ENCODE measurements at regions of chr9 and their contacts with region 1.

Region 1: DNA sequence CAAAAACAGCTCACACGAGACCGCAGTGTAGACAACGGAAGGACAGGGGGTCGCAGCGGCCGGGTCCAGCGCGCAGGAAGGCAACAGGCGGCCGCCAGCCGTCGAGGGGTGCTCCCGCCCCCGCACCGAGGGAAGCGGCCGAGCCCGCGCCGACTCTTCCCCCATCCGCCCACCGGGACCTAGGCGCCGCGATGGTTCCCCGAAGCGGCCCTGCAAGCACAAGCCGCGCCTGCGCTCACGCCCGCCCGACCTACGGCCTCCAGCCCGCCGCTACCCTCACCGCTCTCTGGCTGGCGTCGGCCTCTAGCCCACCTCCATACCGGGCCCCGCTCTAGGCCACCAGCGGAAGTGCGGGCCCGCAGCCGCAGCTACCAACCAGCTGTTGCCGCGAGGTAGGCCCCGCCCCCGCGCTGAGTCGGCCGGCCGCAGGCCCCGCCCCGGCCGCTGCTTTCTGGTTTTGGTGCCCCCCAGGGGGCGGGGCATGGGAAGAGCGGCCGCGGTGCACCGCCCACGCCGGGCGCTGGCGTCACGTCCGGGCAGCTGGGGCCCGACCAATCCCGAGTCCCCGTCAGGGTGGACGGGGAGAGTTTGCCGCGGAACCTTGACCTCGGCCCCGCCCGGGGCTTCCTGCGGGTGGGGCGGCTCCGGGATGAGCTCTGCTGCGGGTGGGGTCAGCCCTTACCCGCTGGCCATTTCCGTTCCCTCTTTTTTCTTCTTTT is at the start of gene SETX:
- DNase-seq: peak; percentile 98
- H3K4me3 ChIP-seq: peak within 1 kb of the TSS; percentile 97
- H3K27ac ChIP-seq: peak within 1 kb of the TSS; percentile 77
- H3K4me1 ChIP-seq: peaks cover 53% of the 10 kb centered on the region
- CTCF ChIP-seq: no peak
- total RNA-seq, gene SETX: 79.2 and 85.8 TPM in 2 replicates

Region 2: GRCh38 chr9:131755541-131756198 is 599.1 kb before region 1 on chr9:
- CTCF ChIA-PET with region 1: interaction called, 12 read pairs
- POLR2A ChIA-PET with region 1: no interaction called
- intact Hi-C with region 1: no loop called
- DNase-seq: peak; percentile 94
- H3K4me3 ChIP-seq: no peak overlapping the region
- H3K27ac ChIP-seq: peak overlapping the region; percentile 18
- H3K4me1 ChIP-seq: peaks cover 80% of the 10 kb centered on the region
- CTCF ChIP-seq: peak; percentile 93

Region 3: DNA sequence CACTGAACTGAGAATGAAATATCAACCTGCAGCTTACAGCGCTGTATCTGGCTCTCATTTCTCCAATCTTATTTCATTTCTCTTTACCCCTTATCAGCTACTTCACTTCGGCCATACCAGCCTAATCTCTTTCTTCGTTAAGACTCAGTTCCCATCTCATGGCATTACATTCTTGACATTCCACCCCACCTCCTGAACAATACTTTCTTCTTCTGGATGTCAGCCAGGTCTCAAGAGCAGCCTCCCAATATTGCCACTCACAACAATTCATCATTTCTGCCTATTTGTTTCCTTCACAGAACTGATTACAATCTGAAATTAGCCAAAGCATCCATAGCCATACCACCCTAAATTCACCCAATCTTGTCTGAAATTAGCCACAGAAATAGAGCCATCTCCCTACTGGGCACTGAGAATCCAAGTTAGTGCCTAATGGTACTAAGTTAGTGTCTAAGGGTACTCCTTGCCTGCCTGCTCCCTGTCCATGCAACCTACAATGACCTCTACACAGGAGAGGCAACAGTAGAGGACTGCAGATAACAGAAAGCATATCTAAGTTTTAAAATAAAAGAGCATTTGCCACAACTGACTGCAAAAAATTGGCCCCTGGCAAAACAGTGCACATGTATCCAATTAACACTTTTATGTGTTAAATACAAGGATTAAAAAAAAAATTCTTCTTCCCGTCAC is 35.2 kb before region 1 on chr9:
- CTCF ChIA-PET with region 1: no interaction called
- POLR2A ChIA-PET with region 1: no interaction called
- intact Hi-C with region 1: no loop called
- DNase-seq: no peak
- H3K4me3 ChIP-seq: no peak overlapping the region
- H3K27ac ChIP-seq: no peak overlapping the region
- H3K4me1 ChIP-seq: peaks cover 4% of the 10 kb centered on the region
- CTCF ChIP-seq: no peak

Region 4: DNA sequence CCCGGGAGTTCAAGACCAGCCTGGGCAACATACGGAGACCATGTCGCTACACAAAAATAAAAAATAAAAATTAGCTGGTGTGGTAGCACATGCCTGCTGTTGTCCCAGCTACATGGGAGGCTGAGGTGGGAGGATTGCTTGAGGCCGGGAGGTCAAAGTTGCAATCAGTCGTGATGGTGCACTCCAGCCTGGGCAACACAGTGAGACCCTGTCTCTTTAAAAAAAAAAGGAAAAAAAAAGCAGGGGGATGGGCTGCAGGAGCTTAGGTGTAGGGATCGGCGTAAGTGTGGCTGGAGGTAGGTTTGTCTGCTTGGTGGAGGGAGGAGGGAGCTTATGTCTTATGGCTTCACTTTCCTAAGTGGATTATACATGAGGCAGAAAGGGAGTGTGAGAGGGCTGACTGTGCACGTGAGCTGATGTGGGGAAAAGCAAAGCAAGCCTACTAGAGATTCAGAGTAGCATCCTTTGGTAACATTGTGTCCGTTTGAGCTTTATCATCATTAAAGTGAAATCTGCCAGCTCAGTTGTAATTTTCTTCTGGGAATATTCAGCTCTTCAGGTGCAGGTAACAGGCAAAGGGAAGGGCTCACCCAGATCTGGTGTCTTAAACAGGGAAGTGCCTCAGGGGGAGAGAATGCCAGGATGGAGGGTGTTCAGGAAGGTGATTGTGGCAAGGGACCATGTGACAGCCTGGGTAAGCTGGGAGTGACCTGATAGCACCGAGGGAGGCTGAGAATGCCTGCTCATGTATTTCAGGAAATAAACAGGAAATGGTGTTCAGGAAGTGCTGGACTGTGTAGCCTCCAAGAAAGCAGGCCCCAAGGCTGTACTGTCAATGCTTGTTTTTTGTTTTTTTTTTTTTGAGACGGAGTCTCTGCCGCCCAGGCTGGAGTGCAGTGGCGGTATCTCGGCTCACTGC is 17.6 kb after region 1 on chr9:
- CTCF ChIA-PET with region 1: interaction called, 5 read pairs
- POLR2A ChIA-PET with region 1: interaction called, 19 read pairs
- intact Hi-C with region 1: no loop called
- DNase-seq: peak; percentile 52
- H3K4me3 ChIP-seq: peak overlapping the region; percentile 29
- H3K27ac ChIP-seq: peak overlapping the region; percentile 51
- H3K4me1 ChIP-seq: peaks cover 38% of the 10 kb centered on the region
- CTCF ChIP-seq: no peak

Region 5: GRCh38 chr9:132381966-132382541 is 27.3 kb after region 1 on chr9:
- CTCF ChIA-PET with region 1: interaction called, 10 read pairs
- POLR2A ChIA-PET with region 1: interaction called, 119 read pairs
- intact Hi-C with region 1: loop called (anchors 1 kb)
- DNase-seq: peak; percentile 93
- H3K4me3 ChIP-seq: peak overlapping the region; percentile 55
- H3K27ac ChIP-seq: peak overlapping the region; percentile 99
- H3K4me1 ChIP-seq: peaks cover 75% of the 10 kb centered on the region
- CTCF ChIP-seq: no peak

Measured in OCI-LY7 (cell line).